Tibial artery (tissue), 4 donors: ENCODE measurements at regions of chr6 and their contacts with region 1.

Region 1: DNA sequence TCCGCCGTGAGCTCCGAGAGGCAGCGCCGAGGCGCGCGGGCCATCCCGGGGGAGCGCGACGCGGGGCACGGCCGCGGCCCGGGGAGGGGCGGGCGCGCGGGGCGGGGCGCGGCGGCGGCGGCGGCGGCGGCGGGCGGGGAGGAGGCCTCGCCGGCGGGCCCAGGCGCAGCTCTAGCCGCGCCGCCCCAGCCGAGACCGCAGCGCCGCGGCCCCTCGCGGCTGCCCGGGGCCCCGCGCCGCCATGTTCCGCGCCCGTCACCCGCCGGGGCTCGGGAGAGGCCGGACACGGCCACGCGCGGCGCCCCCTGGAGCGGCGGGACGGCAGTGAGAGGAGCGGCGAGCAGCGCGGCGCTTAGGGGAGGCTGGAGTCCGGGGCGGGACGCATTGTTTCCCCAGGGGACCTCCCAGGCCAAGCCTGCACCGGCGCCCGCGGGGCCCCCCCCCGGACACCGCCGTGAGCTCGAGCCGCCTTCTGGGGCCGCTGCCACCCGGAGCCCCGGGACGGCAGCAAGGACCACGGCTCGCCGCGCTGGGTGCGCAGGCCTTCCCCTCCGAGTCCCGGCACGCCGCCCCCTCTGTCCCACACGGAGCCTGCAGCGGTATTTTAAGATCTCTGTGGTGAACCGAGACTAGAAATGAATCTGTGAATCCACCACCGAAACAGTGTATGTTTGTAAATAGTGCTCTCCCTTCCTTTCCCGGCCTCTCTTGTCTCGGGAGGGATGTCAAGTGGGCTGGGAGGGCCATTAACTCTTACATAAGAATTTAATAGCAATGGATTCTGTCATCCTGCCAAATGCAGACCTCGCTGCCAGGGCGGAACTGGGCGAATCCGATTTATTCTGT is at the start of gene KIF13A:
- DNase-seq: peak; percentile 64 to 87
- H3K4me3 ChIP-seq: peak within 1 kb of the TSS; percentile 59 to 91
- H3K27ac ChIP-seq: peak within 1 kb of the TSS; percentile 90 to 95
- H3K4me1 ChIP-seq: peaks cover 0 to 34% (median 22%) of the 10 kb centered on the region in 4 donors
- H3K27me3 ChIP-seq: no peaks in the 10 kb centered on the region
- CTCF ChIP-seq: peak; percentile 32 to 41

Region 2: DNA sequence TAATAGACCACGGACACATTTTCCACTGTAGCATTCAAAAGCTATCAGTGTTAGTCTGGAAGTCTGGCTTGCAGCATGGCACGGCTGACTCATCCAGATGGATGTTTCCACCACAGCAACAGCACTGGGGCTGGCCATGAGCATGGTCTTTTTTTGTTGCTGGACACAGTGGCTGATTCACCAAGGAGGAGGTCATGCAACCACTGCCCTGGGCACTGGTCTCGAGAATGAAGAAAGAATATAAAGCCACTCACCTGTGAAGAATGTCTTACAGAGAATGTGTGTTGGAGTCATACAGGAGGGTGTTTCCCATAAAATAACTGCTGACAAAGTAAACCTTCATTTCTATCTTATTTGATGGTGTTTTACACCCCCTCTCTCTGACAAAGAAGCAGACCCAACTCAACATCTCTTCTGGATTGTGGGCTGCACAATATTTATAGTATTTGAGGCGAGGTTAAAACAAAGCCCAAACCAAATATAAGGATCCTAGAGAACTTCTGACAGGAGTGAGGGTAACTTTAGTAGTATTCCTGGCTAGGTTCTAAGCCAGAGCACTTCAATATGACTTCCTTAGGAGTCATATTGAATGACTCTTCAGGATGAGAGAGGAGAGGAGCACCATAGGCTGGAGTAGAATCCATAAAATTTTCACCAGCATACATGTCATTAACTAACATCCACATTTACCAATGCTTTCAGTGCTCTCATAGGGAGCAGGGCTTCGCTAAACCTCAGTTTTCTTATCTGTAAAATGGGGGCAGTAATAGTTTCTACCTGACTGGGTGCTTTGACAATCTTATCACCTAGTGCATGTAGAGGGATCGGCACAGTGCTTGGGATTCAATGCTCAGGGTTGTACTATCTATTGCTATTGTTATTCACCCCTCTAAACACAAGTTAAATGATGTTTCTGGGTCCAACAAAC is 121.7 kb before region 1 on chr6:
- intact Hi-C with region 1: loop called (anchors 10 kb)
- DNase-seq: peak; percentile 87 to 92
- H3K4me3 ChIP-seq: no peak overlapping the region
- H3K27ac ChIP-seq: peak overlapping the region; percentile 76 to 77
- H3K4me1 ChIP-seq: peaks cover 0 to 86% (median 42%) of the 10 kb centered on the region in 4 donors
- H3K27me3 ChIP-seq: no peaks in the 10 kb centered on the region
- CTCF ChIP-seq: no peak

Region 3: GRCh38 chr6:17910189-17910588 is 77.6 kb before region 1 on chr6:
- intact Hi-C with region 1: loop called (anchors 10 kb)
- DNase-seq: no peak
- H3K4me3 ChIP-seq: no peak overlapping the region
- H3K27ac ChIP-seq: peak overlapping the region in 1 of 2 donors; percentile 27
- H3K4me1 ChIP-seq: peaks cover 0 to 67% (median 28%) of the 10 kb centered on the region in 4 donors
- H3K27me3 ChIP-seq: no peaks in the 10 kb centered on the region
- CTCF ChIP-seq: no peak

Region 4: GRCh38 chr6:18042536-18043145 is 54.8 kb after region 1 on chr6:
- intact Hi-C with region 1: loop called (anchors 5 kb)
- DNase-seq: no peak
- H3K4me3 ChIP-seq: no peak overlapping the region
- H3K27ac ChIP-seq: peak overlapping the region; percentile 71 to 82
- H3K4me1 ChIP-seq: peaks cover 0 to 63% (median 24%) of the 10 kb centered on the region in 4 donors
- H3K27me3 ChIP-seq: no peaks in the 10 kb centered on the region
- CTCF ChIP-seq: no peak

Region 5: GRCh38 chr6:18122124-18123093 is 134.6 kb after region 1 on chr6 and contains the start of gene NHLRC1:
- intact Hi-C with region 1: loop called (anchors 5 kb)
- DNase-seq: peak; percentile 91 to 94
- H3K4me3 ChIP-seq: peak within 1 kb of the TSS; percentile 58 to 60
- H3K27ac ChIP-seq: peak within 1 kb of the TSS; percentile 55 to 68
- H3K4me1 ChIP-seq: peaks cover 0 to 24% (median 14%) of the 10 kb centered on the region in 4 donors
- H3K27me3 ChIP-seq: no peaks in the 10 kb centered on the region
- CTCF ChIP-seq: peak; percentile 98

Region 6: GRCh38 chr6:18235524-18235923 is 247.7 kb after region 1 on chr6:
- intact Hi-C with region 1: no loop called
- DNase-seq: no peak
- H3K4me3 ChIP-seq: no peak overlapping the region
- H3K27ac ChIP-seq: no peak overlapping the region
- H3K4me1 ChIP-seq: no peaks in the 10 kb centered on the region
- H3K27me3 ChIP-seq: no peaks in the 10 kb centered on the region
- CTCF ChIP-seq: no peak